ENCODE measurements at regions of chrX and their contacts with region 1.

Region 1: GRCh38 chrX:140733769-140734342 is 24.3 kb downstream of the LINC00632 start:
- DNase-seq: peak in 3 of 9 donors; percentile 7 to 18 (median 10)
- ATAC-seq: peak; percentile 44
- H3K4me3 ChIP-seq: no peak overlapping the region
- H3K4me3 Mint-ChIP-seq: no peak overlapping the region
- H3K27ac ChIP-seq: no peak overlapping the region
- H3K27ac Mint-ChIP-seq: no peak overlapping the region
- H3K4me1 ChIP-seq: no peaks in the 10 kb centered on the region
- H3K4me1 Mint-ChIP-seq: no peaks in the 10 kb centered on the region
- H3K27me3 ChIP-seq: no peaks in the 10 kb centered on the region
- H3K27me3 Mint-ChIP-seq: no peaks in the 10 kb centered on the region

Region 2: GRCh38 chrX:140572724-140573123 is 161.1 kb before region 1 on chrX:
- CTCF ChIA-PET with region 1: no interaction called
- POLR2A ChIA-PET with region 1: no interaction called
- intact Hi-C with region 1: loop called in 1 of 2 experiments (anchors 1 kb)
- DNase-seq: peak in 3 of 9 donors; percentile 0 to 3 (median 3)
- ATAC-seq: no peak
- H3K4me3 ChIP-seq: no peak overlapping the region
- H3K4me3 Mint-ChIP-seq: no peak overlapping the region
- H3K27ac ChIP-seq: no peak overlapping the region
- H3K27ac Mint-ChIP-seq: no peak overlapping the region
- H3K4me1 ChIP-seq: no peaks in the 10 kb centered on the region
- H3K4me1 Mint-ChIP-seq: peaks cover 0 to 6% (median 0%) of the 10 kb centered on the region in 7 donors
- H3K27me3 ChIP-seq: no peaks in the 10 kb centered on the region
- H3K27me3 Mint-ChIP-seq: peaks cover 0 to 3% (median 0%) of the 10 kb centered on the region in 5 donors

Region 3: GRCh38 chrX:140701480-140701879 is 32.4 kb before region 1 on chrX:
- CTCF ChIA-PET with region 1: no interaction called
- POLR2A ChIA-PET with region 1: no interaction called
- intact Hi-C with region 1: loop called (anchors 1 to 2 kb)
- DNase-seq: no peak
- ATAC-seq: no peak
- H3K4me3 ChIP-seq: no peak overlapping the region
- H3K4me3 Mint-ChIP-seq: no peak overlapping the region
- H3K27ac ChIP-seq: no peak overlapping the region
- H3K27ac Mint-ChIP-seq: no peak overlapping the region
- H3K4me1 ChIP-seq: no peaks in the 10 kb centered on the region
- H3K4me1 Mint-ChIP-seq: no peaks in the 10 kb centered on the region
- H3K27me3 ChIP-seq: no peaks in the 10 kb centered on the region
- H3K27me3 Mint-ChIP-seq: no peaks in the 10 kb centered on the region

Region 4: DNA sequence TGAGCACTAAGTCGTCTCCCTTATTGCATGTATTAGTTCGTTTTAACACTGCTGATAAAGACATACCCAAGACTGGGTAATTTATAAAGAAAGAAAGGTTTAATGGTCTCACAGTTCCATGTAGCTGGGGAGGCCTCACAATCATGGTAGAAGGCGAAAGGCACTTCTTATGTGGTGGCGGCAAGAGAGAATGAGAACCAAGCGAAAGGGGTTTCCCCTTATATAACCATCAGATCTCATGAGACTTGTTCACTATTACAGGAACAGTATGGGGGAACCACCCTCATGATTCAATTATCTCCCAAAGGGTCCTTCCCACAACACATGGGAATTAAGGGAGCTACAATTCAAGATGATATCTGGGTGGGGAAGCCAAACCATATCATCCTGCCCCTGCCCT is 60.8 kb after region 1 on chrX:
- CTCF ChIA-PET with region 1: no interaction called
- POLR2A ChIA-PET with region 1: no interaction called
- intact Hi-C with region 1: no loop called
- DNase-seq: no peak
- ATAC-seq: no peak
- H3K4me3 ChIP-seq: no peak overlapping the region
- H3K4me3 Mint-ChIP-seq: no peak overlapping the region
- H3K27ac ChIP-seq: no peak overlapping the region
- H3K27ac Mint-ChIP-seq: no peak overlapping the region
- H3K4me1 ChIP-seq: no peaks in the 10 kb centered on the region
- H3K4me1 Mint-ChIP-seq: no peaks in the 10 kb centered on the region
- H3K27me3 ChIP-seq: no peaks in the 10 kb centered on the region
- H3K27me3 Mint-ChIP-seq: no peaks in the 10 kb centered on the region

Measured in naive thymus-derived CD4-positive, alpha-beta T cell (primary cell).